SK-N-SH (cell line): ENCODE measurements at regions of chr7 and their contacts with region 1.

Region 1: DNA sequence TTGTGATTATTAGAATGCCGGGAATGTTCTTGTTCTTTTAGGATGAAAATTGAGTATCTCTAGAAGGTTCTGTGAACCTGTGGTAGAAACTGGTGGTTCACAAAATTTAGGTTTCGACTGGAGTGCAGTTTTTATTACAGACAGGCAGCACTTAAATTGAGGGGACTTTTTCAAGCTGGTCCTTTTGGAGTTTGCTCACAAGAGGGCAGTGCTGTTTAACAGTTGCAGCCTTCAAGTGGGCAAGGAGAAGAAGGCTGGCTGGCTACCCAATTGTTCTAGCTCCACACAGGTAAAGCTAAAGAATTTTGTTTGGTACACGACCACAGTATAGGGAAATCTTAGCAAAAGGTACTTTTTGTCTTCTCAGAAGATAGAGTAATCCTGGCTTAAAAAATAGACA is 233.6 kb downstream of the SNX13 start:
- DNase-seq: peak; percentile 43
- H3K4me3 ChIP-seq: no peak overlapping the region
- H3K27ac ChIP-seq: no peak overlapping the region
- H3K4me1 ChIP-seq: no peaks in the 10 kb centered on the region
- H3K27me3 ChIP-seq: peaks cover 17% of the 10 kb centered on the region
- CTCF ChIP-seq: peak; percentile 83
- EP300 ChIP-seq: no peak
- RAD21 ChIP-seq: peak; percentile 92

Region 2: DNA sequence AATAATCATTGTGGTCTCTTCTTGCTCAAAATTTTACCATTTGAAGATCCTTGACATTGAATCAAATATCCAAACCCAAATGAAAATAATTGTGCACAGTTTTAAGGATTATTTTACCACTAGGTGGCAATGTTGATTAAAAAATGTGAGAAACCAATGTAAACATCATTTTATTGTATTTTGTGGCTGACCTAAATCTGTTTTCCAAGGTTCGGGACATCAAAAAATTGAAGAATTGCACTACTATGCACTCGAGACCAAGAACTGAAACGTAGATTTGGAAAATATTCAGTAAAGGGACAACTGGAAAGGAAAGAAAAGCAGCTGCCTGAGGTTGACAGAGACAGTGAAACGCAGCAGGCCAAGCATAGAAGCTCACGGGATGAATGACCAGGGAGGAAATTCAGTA is 25.8 kb before region 1 on chr7:
- CTCF ChIA-PET with region 1: interaction called, 26 read pairs
- POLR2A ChIA-PET with region 1: no interaction called
- DNase-seq: no peak
- H3K4me3 ChIP-seq: no peak overlapping the region
- H3K27ac ChIP-seq: peak overlapping the region in 1 of 2 experiments; percentile 65; a peak in 2 of 4 replicates
- H3K4me1 ChIP-seq: peaks cover 0 to 22% of the 10 kb centered on the region in 2 experiments; a peak in 3 of 4 replicates
- H3K27me3 ChIP-seq: no peaks in the 10 kb centered on the region
- CTCF ChIP-seq: peak; percentile 58
- EP300 ChIP-seq: no peak
- RAD21 ChIP-seq: peak; percentile 51

Region 3: GRCh38 chr7:17716816-17717215 is 10.1 kb after region 1 on chr7:
- CTCF ChIA-PET with region 1: interaction called, 16 read pairs
- POLR2A ChIA-PET with region 1: no interaction called
- DNase-seq: no peak
- H3K4me3 ChIP-seq: no peak overlapping the region
- H3K27ac ChIP-seq: no peak overlapping the region
- H3K4me1 ChIP-seq: no peaks in the 10 kb centered on the region
- H3K27me3 ChIP-seq: no peaks in the 10 kb centered on the region; the same call in 1 of the 2 replicates
- CTCF ChIP-seq: no peak
- EP300 ChIP-seq: no peak
- RAD21 ChIP-seq: no peak

Region 4: GRCh38 chr7:17725796-17726195 is 19.1 kb after region 1 on chr7:
- CTCF ChIA-PET with region 1: interaction called, 16 read pairs
- POLR2A ChIA-PET with region 1: no interaction called
- DNase-seq: no peak
- H3K4me3 ChIP-seq: no peak overlapping the region
- H3K27ac ChIP-seq: no peak overlapping the region
- H3K4me1 ChIP-seq: no peaks in the 10 kb centered on the region
- H3K27me3 ChIP-seq: peaks cover 37% of the 10 kb centered on the region; the same call in 1 of the 2 replicates
- CTCF ChIP-seq: no peak
- EP300 ChIP-seq: no peak
- RAD21 ChIP-seq: no peak

Region 5: DNA sequence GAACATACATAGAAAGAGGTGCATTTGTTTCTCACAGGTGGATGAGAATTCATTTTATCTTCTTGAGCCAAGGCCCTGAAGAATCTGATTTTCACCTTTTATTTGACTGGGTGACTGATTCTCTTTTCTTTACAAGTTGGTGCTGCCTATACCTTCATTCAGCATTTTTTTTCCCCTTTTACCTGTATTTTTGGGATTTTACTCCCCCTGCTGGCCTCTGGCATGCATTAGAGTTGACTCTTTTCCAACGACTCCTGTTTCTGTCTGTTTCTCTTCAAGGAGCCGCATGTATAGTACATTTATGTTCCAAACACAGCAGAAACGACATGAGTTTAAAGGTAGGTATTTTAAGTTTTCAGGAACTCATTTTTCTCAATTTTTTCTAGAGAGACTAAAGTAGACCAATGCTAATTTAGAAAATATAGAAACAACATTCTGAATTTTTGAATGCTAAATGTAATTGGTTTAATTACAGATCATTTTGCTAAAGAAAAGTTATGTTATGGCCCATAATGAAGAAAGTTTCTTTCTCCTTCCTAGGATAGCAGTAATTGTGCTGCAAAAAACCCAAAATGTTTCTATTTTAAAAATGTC is 639.0 kb after region 1 on chr7:
- CTCF ChIA-PET with region 1: interaction called, 47 read pairs
- POLR2A ChIA-PET with region 1: no interaction called
- DNase-seq: peak; percentile 21
- H3K4me3 ChIP-seq: no peak overlapping the region; a peak in 1 of 4 replicates
- H3K27ac ChIP-seq: no peak overlapping the region
- H3K4me1 ChIP-seq: no peaks in the 10 kb centered on the region; a peak in 1 of 4 replicates
- H3K27me3 ChIP-seq: no peaks in the 10 kb centered on the region; the same call in 1 of the 2 replicates
- CTCF ChIP-seq: peak; percentile 99
- EP300 ChIP-seq: no peak
- RAD21 ChIP-seq: peak; percentile 95